ENCODE measurements at regions of chr5 and their contacts with region 1.

Region 1: DNA sequence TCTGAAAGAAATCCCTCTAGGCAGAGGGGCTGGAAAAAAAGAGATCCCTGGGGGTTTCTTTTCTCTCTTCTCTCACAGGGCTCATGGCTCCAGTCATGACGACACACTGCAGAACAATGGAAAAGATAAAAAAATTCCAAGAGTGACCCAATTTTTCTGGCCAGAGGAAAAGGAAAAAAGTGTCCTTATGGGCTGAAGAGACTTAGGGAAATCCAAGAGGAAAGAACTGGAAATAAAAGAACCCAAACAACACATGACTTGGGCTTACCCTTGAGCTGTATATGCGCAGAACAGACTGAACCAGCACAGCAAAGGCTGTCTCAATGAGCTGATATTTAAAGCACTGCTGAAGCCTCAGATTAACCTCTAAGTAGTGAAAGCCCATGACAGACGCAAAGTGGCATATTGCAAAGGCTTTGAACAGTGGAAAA is 102.4 kb downstream of the SMIM23 start:
- DNase-seq: no peak
- H3K4me3 ChIP-seq: no peak overlapping the region
- H3K27ac ChIP-seq: no peak overlapping the region
- H3K4me1 ChIP-seq: no peaks in the 10 kb centered on the region
- H3K27me3 ChIP-seq: no peaks in the 10 kb centered on the region
- CTCF ChIP-seq: no peak

Region 2: GRCh38 chr5:171405601-171406005 is 482.5 kb before region 1 on chr5:
- CTCF ChIA-PET with region 1: no interaction called
- POLR2A ChIA-PET with region 1: interaction called, 11 read pairs
- intact Hi-C with region 1: no loop called
- DNase-seq: no peak
- H3K4me3 ChIP-seq: no peak overlapping the region
- H3K27ac ChIP-seq: peak overlapping the region; percentile 16; the same call in 1 of the 2 replicates
- H3K4me1 ChIP-seq: peaks cover 22% of the 10 kb centered on the region; the same call in 1 of the 2 replicates
- H3K27me3 ChIP-seq: no peaks in the 10 kb centered on the region
- CTCF ChIP-seq: peak; percentile 50; the same call in 1 of the 2 replicates